CD14-positive monocyte (primary cell): ENCODE measurements at regions of chr10 and their contacts with region 1.

Region 1: GRCh38 chr10:62689712-62690111 is 114.8 kb upstream of the ADO start:
- DNase-seq: peak; percentile 58 to 81 (median 81)
- H3K4me3 ChIP-seq: peak overlapping the region in 1 of 3 experiments; percentile 38
- H3K4me3 Mint-ChIP-seq: peak overlapping the region; percentile 50 to 72
- H3K27ac ChIP-seq: peak overlapping the region in 1 of 2 donors; percentile 51
- H3K27ac Mint-ChIP-seq: peak overlapping the region; percentile 64 to 91 (median 82)
- H3K4me1 ChIP-seq: peaks cover 32 to 33% of the 10 kb centered on the region in 2 donors
- H3K4me1 Mint-ChIP-seq: peaks cover 35% of the 10 kb centered on the region
- H3K27me3 ChIP-seq: no peaks in the 10 kb centered on the region
- H3K27me3 Mint-ChIP-seq: no peaks in the 10 kb centered on the region
- CTCF ChIP-seq: no peak

Region 2: GRCh38 chr10:62653254-62653653 is 36.5 kb before region 1 on chr10:
- intact Hi-C with region 1: loop called in 1 of 2 experiments (anchors 5 kb)
- DNase-seq: peak; percentile 52 to 79 (median 74)
- H3K4me3 ChIP-seq: no peak overlapping the region
- H3K4me3 Mint-ChIP-seq: no peak overlapping the region
- H3K27ac ChIP-seq: peak overlapping the region in 1 of 2 donors; percentile 34
- H3K27ac Mint-ChIP-seq: peak overlapping the region in 6 of 7 donors; percentile 35 to 76 (median 72)
- H3K4me1 ChIP-seq: peaks cover 25 to 30% of the 10 kb centered on the region in 2 donors
- H3K4me1 Mint-ChIP-seq: peaks cover 23% of the 10 kb centered on the region
- H3K27me3 ChIP-seq: no peaks in the 10 kb centered on the region
- H3K27me3 Mint-ChIP-seq: peaks cover 0 to 4% (median 0%) of the 10 kb centered on the region in 3 donors
- CTCF ChIP-seq: no peak

Region 3: GRCh38 chr10:62726142-62726541 is 36.4 kb after region 1 on chr10:
- intact Hi-C with region 1: loop called in 1 of 2 experiments (anchors 5 kb)
- DNase-seq: no peak
- H3K4me3 ChIP-seq: no peak overlapping the region
- H3K4me3 Mint-ChIP-seq: no peak overlapping the region
- H3K27ac ChIP-seq: no peak overlapping the region
- H3K27ac Mint-ChIP-seq: peak overlapping the region in 1 of 7 donors; percentile 79
- H3K4me1 ChIP-seq: peaks cover 14% of the 10 kb centered on the region in 2 donors
- H3K4me1 Mint-ChIP-seq: peaks cover 12% of the 10 kb centered on the region
- H3K27me3 ChIP-seq: peaks cover 0 to 2% of the 10 kb centered on the region in 2 donors
- H3K27me3 Mint-ChIP-seq: peaks cover 3 to 7% (median 7%) of the 10 kb centered on the region in 3 donors
- CTCF ChIP-seq: no peak

Region 4: GRCh38 chr10:62794306-62794705 is 104.6 kb after region 1 on chr10:
- intact Hi-C with region 1: loop called in 1 of 2 experiments (anchors 10 kb)
- DNase-seq: no peak
- H3K4me3 ChIP-seq: no peak overlapping the region
- H3K4me3 Mint-ChIP-seq: no peak overlapping the region
- H3K27ac ChIP-seq: no peak overlapping the region
- H3K27ac Mint-ChIP-seq: no peak overlapping the region
- H3K4me1 ChIP-seq: no peaks in the 10 kb centered on the region
- H3K4me1 Mint-ChIP-seq: no peaks in the 10 kb centered on the region
- H3K27me3 ChIP-seq: peaks cover 31 to 32% of the 10 kb centered on the region in 2 donors
- H3K27me3 Mint-ChIP-seq: peaks cover 18 to 26% (median 18%) of the 10 kb centered on the region in 3 donors
- CTCF ChIP-seq: no peak